GM13976 (cell line): ENCODE measurements at regions of chr12 and their contacts with region 1.

Region 1: GRCh38 chr12:27723212-27723611 is 12.6 kb downstream of the MRPS35 start:
- DNase-seq: no peak
- CTCF ChIP-seq: no peak

Region 2: DNA sequence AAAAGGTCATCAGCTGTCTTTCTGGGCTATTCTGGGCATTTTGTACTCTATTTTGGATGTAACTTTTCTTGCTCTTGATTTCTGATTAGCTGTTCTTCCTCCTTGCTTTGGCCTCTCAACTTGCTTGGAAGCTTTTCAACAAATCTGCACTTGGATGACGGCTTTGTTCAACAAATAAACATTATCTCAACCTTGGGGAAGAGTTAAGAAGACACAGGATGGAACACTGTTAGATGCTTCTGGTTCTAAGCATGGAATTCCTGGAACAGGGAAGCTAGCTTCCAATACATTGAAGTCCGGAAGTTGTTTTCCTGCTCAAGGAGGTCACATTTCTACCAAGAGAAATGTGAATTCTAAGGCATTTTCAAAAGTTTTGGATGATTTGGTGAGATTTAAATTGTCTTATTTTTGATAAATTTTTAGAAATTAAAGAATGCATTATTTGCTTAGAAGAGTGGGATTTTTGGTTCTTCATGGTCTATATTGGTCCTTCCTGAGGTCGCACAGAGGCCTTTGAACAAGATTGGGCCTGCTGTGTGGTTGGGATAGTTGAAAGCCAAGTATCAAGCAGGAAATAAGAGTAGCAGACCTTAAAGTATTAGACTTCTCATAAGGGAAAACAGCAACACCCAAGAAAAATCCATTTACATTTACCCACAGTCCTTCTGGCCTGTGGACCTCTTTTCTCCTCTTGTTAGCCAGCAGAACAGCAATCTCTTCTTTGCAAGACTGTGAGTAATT is 140.0 kb before region 1 on chr12:
- in situ Hi-C with region 1: no loop called
- DNase-seq: no peak
- CTCF ChIP-seq: no peak

Region 3: GRCh38 chr12:27940756-27941402 is 217.7 kb after region 1 on chr12:
- in situ Hi-C with region 1: loop called (anchors 10 kb)
- DNase-seq: peak; percentile 72
- CTCF ChIP-seq: peak; percentile 83